ENCODE measurements at regions of chr20 and their contacts with region 1.

Region 1: GRCh38 chr20:36573103-36573794 is at the start of gene TGIF2:
- DNase-seq: peak; percentile 93
- ATAC-seq: peak; percentile 76
- H3K4me3 Mint-ChIP-seq: peak within 1 kb of the TSS; percentile 87
- H3K27ac Mint-ChIP-seq: peak within 1 kb of the TSS; percentile 98
- H3K4me1 Mint-ChIP-seq: peaks cover 40% of the 10 kb centered on the region
- H3K27me3 Mint-ChIP-seq: no peaks in the 10 kb centered on the region
- total RNA-seq, gene TGIF2: 29.2 to 32.9 TPM

Region 2: DNA sequence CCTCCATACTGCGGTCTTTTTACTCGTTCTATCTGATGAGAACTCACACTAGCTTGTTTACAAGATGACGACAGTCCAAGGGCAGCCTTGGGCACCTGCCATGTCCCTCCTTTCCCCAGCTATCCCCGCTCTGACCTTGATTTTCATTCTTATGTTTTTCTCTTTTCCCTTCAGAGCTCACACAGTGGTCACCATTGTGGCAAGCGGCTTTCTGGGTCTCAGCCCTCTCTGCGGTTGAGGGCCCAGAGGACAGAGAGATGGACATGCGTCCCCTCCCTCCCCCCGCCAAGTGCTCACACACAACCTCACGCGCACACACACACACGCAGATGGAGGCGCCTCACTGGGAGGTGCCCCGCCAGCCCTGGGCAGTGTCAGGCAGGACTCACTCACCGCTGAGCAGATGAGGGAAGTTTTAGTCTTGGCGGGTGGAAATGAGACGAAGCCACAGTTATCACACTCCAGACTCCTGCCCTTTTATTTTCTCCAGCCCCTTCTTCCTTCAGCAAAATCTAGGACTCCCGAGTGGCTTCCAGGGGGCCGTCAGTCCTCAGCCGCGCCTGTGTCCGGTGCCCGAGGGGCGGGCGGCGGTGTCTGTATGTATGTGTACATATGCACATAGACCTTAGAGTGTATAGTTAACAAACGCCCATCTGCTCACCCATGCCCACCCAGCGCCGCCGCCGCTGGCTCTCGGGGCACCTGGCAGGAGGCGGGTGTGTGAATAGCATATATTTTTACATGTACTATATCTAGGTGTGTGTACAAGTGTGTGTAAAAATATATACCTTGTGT is 45.7 kb before region 1 on chr20:
- CTCF ChIA-PET with region 1: no interaction called
- POLR2A ChIA-PET with region 1: no interaction called
- DNase-seq: no peak
- ATAC-seq: no peak
- H3K4me3 Mint-ChIP-seq: no peak overlapping the region
- H3K27ac Mint-ChIP-seq: no peak overlapping the region
- H3K4me1 Mint-ChIP-seq: no peaks in the 10 kb centered on the region
- H3K27me3 Mint-ChIP-seq: no peaks in the 10 kb centered on the region

Region 3: DNA sequence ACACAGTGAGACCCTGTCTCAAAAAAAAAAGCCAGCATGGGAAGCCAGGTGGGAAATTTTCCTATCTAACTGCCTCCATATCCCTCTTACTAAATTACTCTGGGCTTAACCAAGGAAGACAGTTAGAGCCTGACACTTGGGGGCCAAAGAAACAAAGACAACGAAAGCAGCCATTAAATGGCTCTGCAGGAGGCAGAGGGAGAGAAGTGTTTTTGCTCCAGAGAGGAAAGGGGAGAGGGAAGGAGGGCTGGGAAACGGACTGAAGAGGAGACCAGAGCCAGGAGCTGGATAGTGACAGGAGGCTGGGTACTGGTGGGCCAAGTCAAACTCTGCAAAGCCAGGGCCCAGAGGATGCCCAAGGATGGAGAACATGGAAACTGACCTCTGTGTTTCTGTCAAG is 10.5 kb before region 1 on chr20:
- CTCF ChIA-PET with region 1: interaction called, 10 read pairs
- POLR2A ChIA-PET with region 1: interaction called, 5 read pairs
- DNase-seq: no peak
- ATAC-seq: no peak
- H3K4me3 Mint-ChIP-seq: no peak overlapping the region
- H3K27ac Mint-ChIP-seq: no peak overlapping the region
- H3K4me1 Mint-ChIP-seq: peaks cover 4% of the 10 kb centered on the region
- H3K27me3 Mint-ChIP-seq: no peaks in the 10 kb centered on the region